ENCODE measurements at regions of chr1 and their contacts with region 1.

Region 1: DNA sequence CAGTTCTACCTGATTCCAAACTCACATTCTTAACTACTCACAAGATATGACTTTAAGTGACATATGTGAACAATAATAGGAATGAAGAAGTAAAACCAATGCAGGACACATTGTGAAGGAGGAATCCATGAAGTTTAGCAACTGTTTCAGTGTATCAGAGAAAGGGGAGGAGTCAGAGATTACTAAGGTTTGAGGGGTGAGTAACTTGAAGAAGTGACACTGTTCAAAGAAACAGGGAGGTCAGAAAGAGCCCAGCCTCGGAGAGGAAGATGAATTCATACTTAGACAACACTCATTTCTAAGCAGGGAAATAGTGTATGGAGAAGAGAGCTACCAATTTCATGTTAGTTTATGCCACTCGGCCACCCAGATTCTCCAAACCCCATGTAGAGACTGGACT is 28.2 kb upstream of the RPF1 start:
- DNase-seq: no peak
- H3K4me3 ChIP-seq: no peak overlapping the region
- H3K27ac ChIP-seq: no peak overlapping the region
- H3K4me1 ChIP-seq: no peaks in the 10 kb centered on the region
- H3K27me3 ChIP-seq: no peaks in the 10 kb centered on the region
- CTCF ChIP-seq: no peak
- POLR2A ChIP-seq: no peak

Region 2: GRCh38 chr1:83718338-83718737 is 732.6 kb before region 1 on chr1:
- intact Hi-C with region 1: no loop called
- DNase-seq: no peak
- H3K4me3 ChIP-seq: no peak overlapping the region
- H3K27ac ChIP-seq: no peak overlapping the region
- H3K4me1 ChIP-seq: no peaks in the 10 kb centered on the region
- H3K27me3 ChIP-seq: no peaks in the 10 kb centered on the region
- CTCF ChIP-seq: no peak
- POLR2A ChIP-seq: no peak

Region 3: DNA sequence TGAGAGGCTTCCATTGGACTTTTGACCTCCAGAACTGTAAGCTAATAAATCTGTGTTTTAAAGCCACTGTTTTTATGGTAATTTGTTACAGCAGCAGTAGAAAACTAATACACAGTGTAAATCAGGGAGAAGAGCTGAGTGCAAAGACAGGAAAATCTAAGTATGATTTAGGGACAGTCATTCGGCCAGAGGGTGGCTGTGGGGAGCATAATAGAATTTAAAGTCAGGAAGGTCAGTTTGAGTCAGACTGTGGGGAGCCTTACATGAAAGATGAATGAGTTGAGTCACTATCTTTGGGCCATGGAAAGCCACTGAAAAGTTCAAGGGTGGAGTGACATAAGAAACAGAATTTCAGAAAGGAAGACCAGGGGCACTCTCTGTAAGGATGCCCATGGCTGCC is 291.7 kb after region 1 on chr1:
- intact Hi-C with region 1: loop called in 1 of 2 experiments (anchors 10 kb)
- DNase-seq: no peak
- H3K4me3 ChIP-seq: no peak overlapping the region
- H3K27ac ChIP-seq: no peak overlapping the region
- H3K4me1 ChIP-seq: no peaks in the 10 kb centered on the region
- H3K27me3 ChIP-seq: no peaks in the 10 kb centered on the region
- CTCF ChIP-seq: no peak
- POLR2A ChIP-seq: no peak

Measured in adrenal gland (tissue), 19 donors.